ENCODE measurements at regions of chr2 and their contacts with region 1.

Region 1: GRCh38 chr2:216114714-216115557 is 5.8 kb downstream of the XRCC5 start:
- DNase-seq: peak; percentile 86 to 99 (median 94)

Region 2: DNA sequence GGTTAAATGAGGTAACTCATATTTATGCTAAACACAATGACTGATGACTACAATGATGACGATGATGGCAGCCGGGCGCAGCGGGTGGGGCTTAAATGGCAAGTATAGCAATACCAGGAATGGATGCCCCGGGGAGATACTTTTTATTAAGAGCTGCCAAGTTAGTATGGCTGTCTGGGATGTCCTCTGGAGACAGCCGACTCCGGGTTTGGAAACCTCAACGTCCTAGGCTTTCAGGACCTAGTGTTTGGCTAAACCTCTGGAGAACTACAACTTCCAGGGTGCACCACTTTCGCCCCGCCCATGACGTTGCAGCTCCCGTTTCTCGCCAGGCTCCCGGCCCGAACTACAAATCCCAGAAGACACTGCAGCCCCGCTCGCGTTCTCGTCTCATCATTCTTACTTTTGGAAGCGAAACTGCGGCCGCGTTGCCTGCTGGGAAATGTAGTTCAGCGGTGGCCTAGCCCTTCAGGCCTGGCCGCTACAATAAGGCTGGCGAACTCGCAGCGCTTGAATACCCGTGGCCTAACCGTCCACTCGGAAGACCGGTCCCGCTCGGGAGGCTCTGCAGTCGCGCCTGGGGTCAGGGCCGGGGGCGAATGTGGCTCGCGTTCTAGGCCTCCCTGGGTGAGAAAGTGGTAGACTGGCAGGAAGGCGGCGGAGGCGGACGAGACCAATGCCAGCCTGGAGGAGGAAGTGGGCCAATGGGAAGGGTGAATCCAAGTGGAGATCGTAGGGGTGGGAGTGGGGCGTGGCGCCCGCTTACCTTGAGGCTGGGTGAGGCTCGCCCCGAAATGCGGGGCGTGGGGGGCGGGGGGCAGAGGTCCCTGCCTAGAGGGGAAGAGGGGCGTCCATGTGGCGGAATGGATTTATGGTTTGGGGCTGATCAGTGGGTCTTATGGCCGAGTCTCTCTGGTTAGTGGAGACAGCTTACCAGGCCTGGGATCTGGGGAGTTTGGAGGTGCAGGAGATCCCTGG is 297.4 kb after region 1 on chr2 and contains the start of gene SMARCAL1:
- intact Hi-C with region 1: loop called (anchors 5 kb)
- DNase-seq: peak; percentile 99 to 100 (median 100)

Region 3: GRCh38 chr2:216498418-216499413 is 383.8 kb after region 1 on chr2 and contains the start of gene RPL37A:
- intact Hi-C with region 1: loop called (anchors 10 kb)
- DNase-seq: peak; percentile 90 to 99 (median 93)

Measured in posterior cingulate gyrus (tissue), 11 donors.